ENCODE measurements at regions of chr1 and their contacts with region 1.

Region 1: GRCh38 chr1:44049839-44050238 is 18.6 kb upstream of the SLC6A9 start:
- DNase-seq: peak; percentile 82
- H3K4me3 ChIP-seq: no peak overlapping the region
- H3K27ac ChIP-seq: peak overlapping the region; percentile 79
- H3K27me3 ChIP-seq: no peaks in the 10 kb centered on the region
- CTCF ChIP-seq: no peak

Region 2: GRCh38 chr1:44029906-44030604 is 19.8 kb before region 1 on chr1:
- CTCF ChIA-PET with region 1: interaction called, 31 read pairs
- POLR2A ChIA-PET with region 1: interaction called, 3 read pairs
- DNase-seq: peak; percentile 65
- H3K4me3 ChIP-seq: peak overlapping the region; percentile 84
- H3K27ac ChIP-seq: peak overlapping the region; percentile 47
- H3K27me3 ChIP-seq: no peaks in the 10 kb centered on the region
- CTCF ChIP-seq: no peak

Region 3: GRCh38 chr1:44036409-44037139 is 13.3 kb before region 1 on chr1:
- CTCF ChIA-PET with region 1: interaction called, 31 read pairs
- POLR2A ChIA-PET with region 1: interaction called, 3 read pairs
- DNase-seq: no peak
- H3K4me3 ChIP-seq: no peak overlapping the region
- H3K27ac ChIP-seq: peak overlapping the region; percentile 11
- H3K27me3 ChIP-seq: no peaks in the 10 kb centered on the region
- CTCF ChIP-seq: peak; percentile 63

Region 4: GRCh38 chr1:44059956-44060355 is 10.1 kb after region 1 on chr1:
- CTCF ChIA-PET with region 1: interaction called, 15 read pairs
- POLR2A ChIA-PET with region 1: no interaction called
- DNase-seq: no peak
- H3K4me3 ChIP-seq: no peak overlapping the region
- H3K27ac ChIP-seq: no peak overlapping the region
- H3K27me3 ChIP-seq: no peaks in the 10 kb centered on the region
- CTCF ChIP-seq: no peak

Measured in AG04450 (cell line).